Calu3 (cell line): ENCODE measurements at regions of chr2 and their contacts with region 1.

Region 1: GRCh38 chr2:174835797-174836255 is 71.6 kb upstream of the CHRNA1 start:
- DNase-seq: no peak
- H3K4me3 Mint-ChIP-seq: no peak overlapping the region
- H3K27ac Mint-ChIP-seq: no peak overlapping the region
- H3K4me1 Mint-ChIP-seq: no peaks in the 10 kb centered on the region
- H3K27me3 Mint-ChIP-seq: no peaks in the 10 kb centered on the region
- CTCF ChIP-seq: no peak

Region 2: GRCh38 chr2:174634130-174635014 is 201.5 kb before region 1 on chr2:
- CTCF ChIA-PET with region 1: no interaction called
- intact Hi-C with region 1: no loop called
- DNase-seq: no peak
- H3K4me3 Mint-ChIP-seq: no peak overlapping the region
- H3K27ac Mint-ChIP-seq: no peak overlapping the region
- H3K4me1 Mint-ChIP-seq: no peaks in the 10 kb centered on the region
- H3K27me3 Mint-ChIP-seq: peaks cover 6% of the 10 kb centered on the region
- CTCF ChIP-seq: no peak

Region 3: GRCh38 chr2:174846941-174847938 is 11.4 kb after region 1 on chr2:
- CTCF ChIA-PET with region 1: no interaction called
- intact Hi-C with region 1: loop called (anchors 2 kb)
- DNase-seq: peak; percentile 4
- H3K4me3 Mint-ChIP-seq: no peak overlapping the region
- H3K27ac Mint-ChIP-seq: no peak overlapping the region
- H3K4me1 Mint-ChIP-seq: peaks cover 13% of the 10 kb centered on the region
- H3K27me3 Mint-ChIP-seq: no peaks in the 10 kb centered on the region
- CTCF ChIP-seq: no peak

Region 4: GRCh38 chr2:174859563-174860169 is 23.8 kb after region 1 on chr2:
- CTCF ChIA-PET with region 1: no interaction called
- intact Hi-C with region 1: no loop called
- DNase-seq: no peak
- H3K4me3 Mint-ChIP-seq: no peak overlapping the region
- H3K27ac Mint-ChIP-seq: no peak overlapping the region
- H3K4me1 Mint-ChIP-seq: no peaks in the 10 kb centered on the region
- H3K27me3 Mint-ChIP-seq: no peaks in the 10 kb centered on the region
- CTCF ChIP-seq: no peak